Posterior vena cava (tissue), 2 donors: ENCODE measurements at regions of chr4 and their contacts with region 1.

Region 1: GRCh38 chr4:67954890-67955289 is 8.4 kb downstream of the TMPRSS11A start:
- DNase-seq: no peak

Region 2: DNA sequence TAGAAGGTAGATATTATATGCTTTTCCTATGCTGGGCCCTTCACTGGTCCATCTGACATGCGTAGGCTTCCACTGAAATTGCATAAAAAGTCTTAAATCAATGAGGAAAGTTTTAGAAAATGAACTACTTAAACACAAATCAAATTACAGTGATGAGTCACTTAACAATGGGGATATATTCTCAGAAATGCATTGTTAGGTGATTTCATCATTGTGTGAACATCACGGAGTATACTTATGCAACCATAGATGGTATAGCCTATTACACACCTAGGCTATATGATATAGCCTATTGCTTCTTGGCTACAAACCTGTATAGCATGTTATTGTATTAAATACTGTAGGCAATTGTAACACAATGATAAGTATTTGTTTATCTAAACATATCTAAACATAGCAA is 386.1 kb before region 1 on chr4:
- intact Hi-C with region 1: no loop called
- DNase-seq: no peak

Region 3: GRCh38 chr4:67918428-67918827 is 36.5 kb before region 1 on chr4:
- intact Hi-C with region 1: loop called in 1 of 2 experiments (anchors 1 kb)
- DNase-seq: no peak

Region 4: GRCh38 chr4:68218044-68218443 is 263.2 kb after region 1 on chr4:
- intact Hi-C with region 1: no loop called
- DNase-seq: no peak